ENCODE measurements at regions of chr15 and their contacts with region 1.

Region 1: DNA sequence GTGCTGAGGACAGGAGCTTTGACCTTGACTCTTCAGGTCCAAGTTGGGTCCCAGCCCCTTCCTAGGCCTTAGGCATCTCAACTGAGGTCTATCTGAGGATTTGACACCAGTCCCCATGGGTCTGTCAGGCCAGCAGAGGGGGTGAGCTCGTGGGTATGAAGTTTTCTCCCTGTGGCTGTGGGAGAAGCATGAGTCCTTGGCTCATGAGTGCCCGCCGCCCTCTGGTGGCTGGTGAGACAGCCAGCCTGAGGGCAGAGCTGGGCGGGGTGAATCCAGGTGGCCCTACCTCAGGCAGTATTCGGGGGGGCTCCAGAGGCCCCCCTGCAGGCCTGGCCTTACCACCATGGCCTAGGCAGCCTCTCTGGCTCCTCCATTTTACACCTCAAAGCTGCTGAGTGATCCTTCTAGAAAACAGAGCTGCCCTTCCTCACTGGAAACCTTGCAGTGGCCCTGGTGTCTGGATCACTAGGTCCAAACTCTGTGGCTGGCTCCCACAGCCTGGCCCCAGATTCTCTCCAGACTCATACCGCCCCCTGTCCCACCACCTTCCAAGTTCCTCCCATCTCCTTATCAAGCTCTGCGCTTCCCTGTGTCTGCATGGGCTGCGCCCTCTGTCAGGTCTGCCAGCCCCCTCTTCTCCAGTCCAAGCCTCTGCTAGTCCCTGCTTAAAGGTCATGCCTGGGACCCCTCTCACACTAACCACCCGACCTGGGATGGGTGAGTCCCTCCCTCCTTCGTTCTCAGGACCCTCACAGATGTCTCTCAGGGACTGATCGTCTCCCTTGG is 16.1 kb downstream of the SH2D7 start:
- DNase-seq: peak; percentile 49 to 83
- H3K4me3 ChIP-seq: no peak overlapping the region
- H3K27ac ChIP-seq: no peak overlapping the region
- H3K4me1 ChIP-seq: peaks cover 0 to 2% (median 0%) of the 10 kb centered on the region in 4 experiments; a peak in 1 of 7 replicates
- H3K27me3 ChIP-seq: no peaks in the 10 kb centered on the region
- CTCF ChIP-seq: peak; percentile 81 to 98 (median 81)
- EP300 ChIP-seq: no peak
- POLR2A ChIP-seq: no peak
- RAD21 ChIP-seq: peak; percentile 84 to 86

Region 2: DNA sequence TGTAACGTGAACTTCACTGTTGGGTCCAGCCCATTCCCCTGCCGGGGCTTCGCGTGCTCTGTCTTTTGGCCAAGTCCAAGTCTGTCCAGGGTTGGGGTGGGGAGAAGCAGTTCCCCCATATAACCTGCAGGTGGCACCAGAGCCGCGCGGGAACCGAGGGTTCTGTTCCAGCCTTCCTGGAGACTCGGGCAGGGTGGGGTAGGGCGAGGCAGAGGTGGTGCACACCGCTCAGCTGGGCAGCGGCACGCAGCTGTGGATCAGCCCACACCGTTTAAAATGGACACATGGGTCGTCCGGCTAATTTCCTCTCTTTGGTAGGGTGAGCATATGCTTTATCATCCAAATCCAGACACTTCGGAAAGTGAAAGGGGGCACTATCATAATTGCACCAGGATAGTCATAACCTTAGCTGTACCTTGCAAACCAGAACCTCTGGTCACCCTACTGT is 149.0 kb before region 1 on chr15:
- CTCF ChIA-PET with region 1: interaction called, 30 read pairs
- POLR2A ChIA-PET with region 1: interaction called, 4 read pairs
- DNase-seq: peak; percentile 58 to 99
- H3K4me3 ChIP-seq: no peak overlapping the region
- H3K27ac ChIP-seq: no peak overlapping the region
- H3K4me1 ChIP-seq: peaks cover 0 to 5% (median 1%) of the 10 kb centered on the region in 4 experiments; a peak in 4 of 7 replicates
- H3K27me3 ChIP-seq: no peaks in the 10 kb centered on the region; a peak in 1 of 7 replicates
- CTCF ChIP-seq: peak; percentile 90 to 97 (median 97)
- EP300 ChIP-seq: no peak
- POLR2A ChIP-seq: no peak
- RAD21 ChIP-seq: peak; percentile 97 to 98

Region 3: DNA sequence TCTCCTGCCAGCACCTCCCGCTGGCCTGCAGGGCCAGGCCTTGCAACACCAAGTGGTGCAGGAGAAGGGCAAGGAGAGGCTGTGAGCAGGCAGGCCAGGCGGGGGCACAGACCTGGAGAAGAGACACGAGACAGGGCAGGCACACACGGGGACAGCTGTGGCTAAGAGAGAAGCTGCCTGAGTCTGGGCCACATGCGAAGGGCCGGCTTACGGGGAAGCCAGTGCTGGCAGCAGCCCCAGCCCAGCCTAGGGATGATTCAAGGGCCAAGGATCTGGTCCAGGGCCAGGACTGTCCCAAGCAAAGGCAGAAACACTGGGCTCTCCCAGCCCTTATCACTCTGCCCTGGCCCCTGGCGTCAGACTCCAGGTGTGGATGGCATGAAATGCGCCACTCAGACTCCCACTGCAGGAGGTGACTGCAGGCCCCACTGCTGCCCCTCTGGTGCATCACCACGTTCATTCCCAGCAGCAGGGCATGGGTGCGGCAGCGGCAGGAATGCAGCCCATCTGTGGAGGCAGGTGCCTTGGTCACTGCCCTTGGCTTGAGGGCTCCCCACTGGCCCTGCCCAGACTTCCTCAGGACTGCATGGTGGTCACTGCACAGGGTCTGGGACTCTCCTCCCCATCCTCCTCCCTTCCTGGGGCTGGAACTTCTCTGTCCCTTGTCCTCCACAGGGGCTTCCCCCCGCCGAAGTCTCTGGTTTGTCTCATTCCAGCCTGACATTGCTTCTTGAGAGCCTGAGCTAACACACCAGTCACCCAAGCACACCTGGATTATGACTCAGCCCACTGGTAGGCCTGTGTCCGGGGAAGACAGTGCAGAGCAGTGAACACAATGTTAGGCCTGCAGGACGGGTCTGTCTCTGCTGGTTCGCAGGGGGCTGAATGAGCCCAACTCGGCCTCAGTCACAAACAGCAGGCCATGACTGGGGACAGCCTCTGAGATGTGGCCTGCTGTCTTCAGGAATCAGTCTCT is 100.3 kb before region 1 on chr15:
- CTCF ChIA-PET with region 1: interaction called, 29 read pairs
- POLR2A ChIA-PET with region 1: no interaction called
- DNase-seq: no peak
- H3K4me3 ChIP-seq: no peak overlapping the region
- H3K27ac ChIP-seq: no peak overlapping the region
- H3K4me1 ChIP-seq: peaks cover 0 to 4% (median 0%) of the 10 kb centered on the region in 4 experiments; a peak in 3 of 7 replicates
- H3K27me3 ChIP-seq: no peaks in the 10 kb centered on the region
- CTCF ChIP-seq: no peak
- EP300 ChIP-seq: no peak
- POLR2A ChIP-seq: no peak
- RAD21 ChIP-seq: no peak

Region 4: GRCh38 chr15:78120523-78120922 is 12.0 kb after region 1 on chr15:
- CTCF ChIA-PET with region 1: interaction called, 28 read pairs
- POLR2A ChIA-PET with region 1: interaction called, 4 read pairs
- DNase-seq: peak in 1 of 2 experiments; percentile 52
- H3K4me3 ChIP-seq: peak overlapping the region in 1 of 4 experiments; percentile 1; a peak in 3 of 8 replicates
- H3K27ac ChIP-seq: peak overlapping the region; percentile 32; the same call in 1 of the 2 replicates
- H3K4me1 ChIP-seq: peaks cover 0 to 11% (median 9%) of the 10 kb centered on the region in 4 experiments; a peak in 6 of 7 replicates
- H3K27me3 ChIP-seq: no peaks in the 10 kb centered on the region
- CTCF ChIP-seq: no peak
- EP300 ChIP-seq: no peak
- POLR2A ChIP-seq: no peak
- RAD21 ChIP-seq: no peak

Region 5: DNA sequence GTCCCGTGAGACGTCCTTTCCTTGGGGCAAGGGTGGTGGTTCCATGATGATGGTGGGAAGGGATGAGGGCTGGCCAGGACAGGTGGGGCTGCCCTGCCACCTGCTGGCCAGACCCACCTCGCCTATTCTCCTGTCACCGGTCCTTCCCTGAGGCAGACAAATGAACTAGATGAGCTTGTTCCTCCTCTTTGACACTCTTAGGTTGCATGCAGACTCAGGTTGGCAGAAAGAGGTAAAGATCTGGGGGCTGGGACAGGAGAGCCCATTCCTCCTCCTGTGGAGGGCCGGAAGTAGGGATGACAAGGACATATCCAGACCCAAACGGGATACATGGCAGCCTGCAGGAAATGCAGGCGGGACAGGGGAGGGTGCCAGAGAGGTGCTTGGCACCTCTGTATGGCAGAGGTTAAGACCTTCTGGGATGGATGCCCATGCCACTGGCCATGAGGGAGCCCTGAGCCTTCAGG is 87.3 kb after region 1 on chr15:
- CTCF ChIA-PET with region 1: interaction called, 78 read pairs
- POLR2A ChIA-PET with region 1: no interaction called
- DNase-seq: peak in 1 of 2 experiments; percentile 61
- H3K4me3 ChIP-seq: no peak overlapping the region
- H3K27ac ChIP-seq: no peak overlapping the region
- H3K4me1 ChIP-seq: no peaks in the 10 kb centered on the region
- H3K27me3 ChIP-seq: no peaks in the 10 kb centered on the region
- CTCF ChIP-seq: peak; percentile 87 to 93 (median 90)
- EP300 ChIP-seq: no peak
- POLR2A ChIP-seq: no peak
- RAD21 ChIP-seq: peak; percentile 86 to 87

Measured in H1 (cell line).